Activated CD4-positive, alpha-beta T cell treated with anti-CD3 and anti-CD28 coated beads, Interleukin-2, amount 10 ng/mL, durations not matched to agents 24 days and 14 days (primary cell): ENCODE measurements at regions of chr21 and their contacts with region 1.

Region 1: GRCh38 chr21:14533504-14534428 is 12.3 kb downstream of the SAMSN1 start:
- DNase-seq: peak; percentile 79
- H3K4me3 Mint-ChIP-seq: peak overlapping the region; percentile 85
- H3K27ac Mint-ChIP-seq: peak overlapping the region; percentile 100
- H3K4me1 Mint-ChIP-seq: peaks cover 59% of the 10 kb centered on the region
- H3K27me3 Mint-ChIP-seq: no peaks in the 10 kb centered on the region

Region 2: DNA sequence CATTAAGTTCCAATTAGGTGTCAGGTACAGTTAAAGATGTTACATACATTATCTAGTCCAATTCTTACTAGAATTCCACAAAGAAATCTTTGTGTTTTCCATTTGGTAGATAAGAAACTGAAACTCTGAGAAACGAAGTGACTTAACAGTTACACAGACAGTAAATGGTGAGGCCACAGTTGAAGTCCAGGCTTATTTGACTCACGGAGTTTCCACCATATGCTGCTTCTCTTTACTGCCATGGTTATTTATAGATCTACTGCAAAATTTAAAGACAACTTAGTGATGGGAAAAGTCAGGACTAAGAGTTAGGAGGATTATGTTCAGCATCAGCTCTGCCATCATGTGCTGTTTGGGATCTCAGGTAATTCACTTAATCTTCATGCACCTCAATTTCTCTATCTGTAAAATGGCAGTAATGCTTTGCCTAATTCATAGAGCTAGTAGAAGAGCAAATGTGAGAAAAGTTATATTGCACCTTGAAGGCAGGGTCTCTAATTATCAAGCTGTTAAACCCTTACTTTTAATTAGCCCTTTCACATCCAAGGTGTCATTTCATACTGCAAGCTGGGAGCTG is 38.5 kb after region 1 on chr21:
- intact Hi-C with region 1: loop called (anchors 1 kb)
- DNase-seq: no peak
- H3K4me3 Mint-ChIP-seq: peak overlapping the region; percentile 64
- H3K27ac Mint-ChIP-seq: peak overlapping the region; percentile 80
- H3K4me1 Mint-ChIP-seq: peaks cover 44% of the 10 kb centered on the region
- H3K27me3 Mint-ChIP-seq: no peaks in the 10 kb centered on the region

Region 3: GRCh38 chr21:14620152-14620551 is 86.4 kb after region 1 on chr21:
- intact Hi-C with region 1: loop called (anchors 1 kb)
- DNase-seq: no peak
- H3K4me3 Mint-ChIP-seq: no peak overlapping the region
- H3K27ac Mint-ChIP-seq: peak overlapping the region; percentile 73
- H3K4me1 Mint-ChIP-seq: peaks cover 25% of the 10 kb centered on the region
- H3K27me3 Mint-ChIP-seq: no peaks in the 10 kb centered on the region

Region 4: DNA sequence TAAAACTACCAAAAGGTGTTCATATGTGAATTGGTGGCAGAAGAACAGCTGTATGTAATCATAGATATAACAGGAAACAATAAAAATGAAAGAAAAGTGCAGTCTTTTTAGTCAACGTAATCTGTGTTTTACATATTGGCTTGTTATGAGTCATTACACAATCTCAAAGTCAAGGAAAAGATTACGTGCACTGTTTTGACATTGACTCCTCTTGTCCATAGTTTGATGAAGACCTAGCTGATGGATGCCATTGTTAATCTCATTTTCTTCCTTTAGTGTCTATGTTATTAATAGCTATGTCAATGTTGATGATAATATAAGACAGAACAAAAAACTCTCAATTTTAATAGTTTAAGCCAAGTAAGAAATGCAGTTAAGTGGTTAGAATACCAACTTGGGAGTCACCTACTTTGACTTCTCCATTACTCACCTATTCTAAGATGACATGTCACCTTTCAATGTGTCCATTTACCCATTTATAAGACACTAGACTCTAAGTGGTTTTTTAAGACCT is 96.8 kb after region 1 on chr21:
- intact Hi-C with region 1: loop called (anchors 2 kb)
- DNase-seq: no peak
- H3K4me3 Mint-ChIP-seq: no peak overlapping the region
- H3K27ac Mint-ChIP-seq: peak overlapping the region; percentile 78
- H3K4me1 Mint-ChIP-seq: peaks cover 24% of the 10 kb centered on the region
- H3K27me3 Mint-ChIP-seq: no peaks in the 10 kb centered on the region

Region 5: DNA sequence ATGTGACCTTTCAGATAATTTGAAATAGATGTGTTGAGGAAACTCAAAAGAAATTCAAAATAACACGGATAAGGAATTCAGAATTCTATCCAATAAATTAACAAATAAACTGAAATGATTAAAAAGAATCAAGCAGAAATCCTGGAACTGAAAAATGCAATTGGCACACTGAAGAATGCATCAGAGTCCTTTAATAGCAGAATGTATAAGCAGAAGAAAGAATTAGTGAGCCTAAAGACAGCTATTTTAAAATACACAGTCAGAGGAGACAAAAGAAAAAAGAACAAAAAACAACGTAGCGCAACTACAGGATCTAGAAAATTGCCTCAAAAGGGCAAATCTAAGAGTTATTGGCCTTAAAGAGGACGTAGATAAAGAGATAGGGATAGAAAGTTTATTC is 111.9 kb after region 1 on chr21:
- intact Hi-C with region 1: no loop called
- DNase-seq: no peak
- H3K4me3 Mint-ChIP-seq: no peak overlapping the region
- H3K27ac Mint-ChIP-seq: no peak overlapping the region
- H3K4me1 Mint-ChIP-seq: no peaks in the 10 kb centered on the region
- H3K27me3 Mint-ChIP-seq: no peaks in the 10 kb centered on the region